Thyroid gland (tissue), 4 donors: ENCODE measurements at regions of chr17 and their contacts with region 1.

Region 1: GRCh38 chr17:35119368-35120165 is at the start of gene RAD51D:
- DNase-seq: peak; percentile 80 to 82
- H3K4me3 ChIP-seq: peak within 1 kb of the TSS; percentile 2 to 77 (median 69)
- H3K27ac ChIP-seq: peak within 1 kb of the TSS; percentile 64 to 76 (median 64)
- H3K4me1 ChIP-seq: peaks cover 11 to 14% of the 10 kb centered on the region in 2 donors
- H3K27me3 ChIP-seq: no peaks in the 10 kb centered on the region
- CTCF ChIP-seq: peak; percentile 53 to 99 (median 92)
- POLR2A ChIP-seq: peak in 1 of 2 donors; percentile 57
- total RNA-seq, gene RAD51D: 7.8 to 15.6 (median 12.5) TPM

Region 2: DNA sequence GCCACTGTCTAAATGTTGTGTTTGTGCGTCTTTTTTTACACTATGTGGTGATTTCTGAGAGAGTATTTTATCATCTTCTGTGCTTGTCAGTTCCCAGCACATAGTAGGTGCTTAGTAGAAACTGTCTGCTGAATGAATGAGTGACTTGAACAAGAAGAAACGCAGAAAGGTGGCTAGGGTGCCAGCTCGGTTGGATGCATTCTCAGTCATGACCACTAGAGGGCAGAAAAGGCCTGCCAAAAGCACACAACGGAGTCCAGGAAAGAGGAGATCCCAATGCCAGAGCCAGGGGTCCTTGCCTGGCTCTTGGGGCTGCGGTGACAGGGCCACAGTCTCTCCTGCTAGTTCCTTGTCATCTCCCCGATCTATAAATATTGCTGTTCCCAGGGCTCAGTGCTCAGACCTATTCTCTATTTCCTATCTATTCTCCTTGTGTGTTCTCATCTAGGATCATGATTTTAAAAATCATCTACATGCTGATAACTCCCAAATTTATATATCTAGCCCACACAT is 699.3 kb before region 1 on chr17:
- intact Hi-C with region 1: loop called (anchors 5 kb)
- DNase-seq: peak; percentile 45 to 54
- H3K4me3 ChIP-seq: no peak overlapping the region
- H3K27ac ChIP-seq: no peak overlapping the region
- H3K4me1 ChIP-seq: no peaks in the 10 kb centered on the region
- H3K27me3 ChIP-seq: peaks cover 9% of the 10 kb centered on the region
- CTCF ChIP-seq: peak; percentile 70 to 91 (median 83)
- POLR2A ChIP-seq: no peak

Region 3: GRCh38 chr17:34542700-34543336 is 576.7 kb before region 1 on chr17:
- intact Hi-C with region 1: loop called (anchors 5 kb)
- DNase-seq: peak; percentile 25 to 26
- H3K4me3 ChIP-seq: no peak overlapping the region
- H3K27ac ChIP-seq: no peak overlapping the region
- H3K4me1 ChIP-seq: no peaks in the 10 kb centered on the region
- H3K27me3 ChIP-seq: no peaks in the 10 kb centered on the region
- CTCF ChIP-seq: peak; percentile 61 to 86 (median 70)
- POLR2A ChIP-seq: no peak

Region 4: DNA sequence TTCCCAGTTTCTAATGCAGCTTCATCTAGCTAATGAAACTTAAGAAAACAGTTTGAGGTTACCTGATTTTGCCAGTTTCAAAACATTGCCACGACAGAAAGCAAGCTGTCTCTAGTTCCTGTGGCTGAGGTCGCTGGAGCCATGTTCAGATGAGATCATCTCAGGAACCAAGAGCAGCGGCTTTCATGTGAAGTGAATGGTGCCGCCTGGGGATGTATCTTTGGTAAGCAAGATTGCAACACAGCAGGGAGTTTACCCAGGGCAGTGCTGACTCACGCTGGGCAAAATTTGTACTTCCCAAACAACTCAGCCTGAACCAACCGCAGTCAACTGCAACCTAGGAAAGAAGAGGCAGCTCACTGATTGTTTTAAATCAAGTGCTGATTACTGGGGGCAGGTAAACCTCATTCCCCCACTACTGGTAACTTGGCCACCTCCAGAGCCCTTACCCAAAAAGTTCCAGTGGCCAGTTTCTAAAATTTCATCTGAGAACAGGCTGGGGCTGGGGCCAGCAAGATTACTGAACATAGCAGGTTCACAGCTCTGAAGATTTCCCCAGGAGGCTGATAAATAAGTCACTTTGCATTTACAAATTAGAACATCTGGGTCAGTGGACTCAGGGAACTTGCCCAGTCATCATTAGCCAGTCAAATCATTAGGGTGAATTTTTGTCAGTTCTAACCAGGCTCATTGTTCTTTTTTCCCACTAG is 55.9 kb before region 1 on chr17 and contains the start of gene RFFL:
- intact Hi-C with region 1: no loop called
- DNase-seq: peak; percentile 96 to 97
- H3K4me3 ChIP-seq: no peak within 1 kb of the TSS
- H3K27ac ChIP-seq: peak within 1 kb of the TSS; percentile 91 to 93 (median 92)
- H3K4me1 ChIP-seq: peaks cover 35 to 58% of the 10 kb centered on the region in 2 donors
- H3K27me3 ChIP-seq: no peaks in the 10 kb centered on the region
- CTCF ChIP-seq: peak in 3 of 6 experiments; percentile 27 to 41 (median 34)
- POLR2A ChIP-seq: peak in 1 of 2 donors; percentile 87
- total RNA-seq, gene RFFL: 51.1 to 145 (median 96.1) TPM